Sciatic nerve (tissue), 2 donors: ENCODE measurements at regions of chr4 and their contacts with region 1.

Region 1: GRCh38 chr4:139642364-139642763 is 23.3 kb upstream of the MGST2 start:
- DNase-seq: no peak
- ATAC-seq: no peak

Region 2: DNA sequence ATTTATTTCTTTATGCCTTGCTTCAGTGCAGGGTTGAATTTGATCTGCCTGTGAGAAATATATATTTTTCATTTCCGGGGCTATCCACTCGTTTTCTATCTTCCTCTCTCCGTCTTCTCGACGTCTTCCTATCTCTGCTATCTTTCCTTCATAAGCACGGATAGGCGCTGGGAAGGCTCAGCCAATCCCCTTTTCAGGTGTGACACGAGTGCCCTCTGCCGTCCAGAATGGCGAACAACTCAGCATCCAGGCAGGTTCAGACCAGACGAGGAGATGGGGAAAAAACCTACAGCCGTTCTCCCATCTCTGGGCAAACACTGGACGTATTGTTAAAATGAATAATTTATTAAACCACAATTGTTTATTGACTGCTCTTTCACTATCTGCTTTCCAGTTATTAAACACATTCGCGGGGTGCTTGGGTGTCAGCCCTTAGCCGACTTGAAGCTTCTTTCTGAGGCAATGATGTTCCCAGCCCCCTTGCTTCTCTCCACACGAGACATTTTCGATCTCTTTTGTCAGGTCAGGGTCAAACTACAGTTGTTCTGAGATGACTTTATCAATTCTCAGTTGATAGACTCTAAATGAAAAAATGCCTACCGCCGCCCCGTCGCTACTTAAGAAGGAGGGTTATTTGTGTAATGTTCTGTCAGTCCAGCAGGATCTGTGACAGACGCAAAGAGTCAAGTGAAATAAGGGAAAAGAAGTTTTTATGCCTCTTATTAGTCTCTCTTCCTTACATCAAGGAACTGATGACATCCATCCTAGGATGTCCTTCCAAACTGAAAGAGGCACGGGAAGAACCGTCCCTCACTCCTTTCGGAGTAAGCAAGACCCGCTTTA is 723.0 kb before region 1 on chr4:
- intact Hi-C with region 1: loop called (anchors 5 kb)
- DNase-seq: peak; percentile 85
- ATAC-seq: peak; percentile 92